K562 (cell line): ENCODE measurements at regions of chr17 and their contacts with region 1.

Region 1: GRCh38 chr17:1399679-1400512 is at the start of gene YWHAE:
- DNase-seq: peak; percentile 83 to 95 (median 87)
- ATAC-seq: peak; percentile 97
- H3K4me3 ChIP-seq: peak within 1 kb of the TSS; percentile 98
- H3K27ac ChIP-seq: peak within 1 kb of the TSS; percentile 99
- H3K4me1 ChIP-seq: peaks cover 8 to 15% of the 10 kb centered on the region in 2 experiments; a peak in 4 of 5 replicates
- H3K27me3 ChIP-seq: no peaks in the 10 kb centered on the region
- CTCF ChIP-seq: no peak
- EP300 ChIP-seq: no peak
- POLR2A ChIP-seq: peak; percentile 96
- RAD21 ChIP-seq: 0 out of 4 replicates have a peak, but pooled peaks of 1 of the 2 experiments have one; percentile 8
- polyA plus RNA-seq, gene YWHAE: 323 to 513 TPM

Region 2: GRCh38 chr17:1384905-1385435 is 14.9 kb before region 1 on chr17:
- CTCF ChIA-PET with region 1: no interaction called
- POLR2A ChIA-PET with region 1: interaction called, 17 read pairs
- in situ Hi-C with region 1: no loop called
- intact Hi-C with region 1: no loop called
- DNase-seq: no peak
- ATAC-seq: no peak
- H3K4me3 ChIP-seq: no peak overlapping the region
- H3K27ac ChIP-seq: no peak overlapping the region
- H3K4me1 ChIP-seq: peaks cover 3 to 4% of the 10 kb centered on the region in 2 experiments; a peak in 3 of 5 replicates
- H3K27me3 ChIP-seq: no peaks in the 10 kb centered on the region
- CTCF ChIP-seq: no peak
- EP300 ChIP-seq: no peak
- POLR2A ChIP-seq: no peak
- RAD21 ChIP-seq: no peak

Region 3: DNA sequence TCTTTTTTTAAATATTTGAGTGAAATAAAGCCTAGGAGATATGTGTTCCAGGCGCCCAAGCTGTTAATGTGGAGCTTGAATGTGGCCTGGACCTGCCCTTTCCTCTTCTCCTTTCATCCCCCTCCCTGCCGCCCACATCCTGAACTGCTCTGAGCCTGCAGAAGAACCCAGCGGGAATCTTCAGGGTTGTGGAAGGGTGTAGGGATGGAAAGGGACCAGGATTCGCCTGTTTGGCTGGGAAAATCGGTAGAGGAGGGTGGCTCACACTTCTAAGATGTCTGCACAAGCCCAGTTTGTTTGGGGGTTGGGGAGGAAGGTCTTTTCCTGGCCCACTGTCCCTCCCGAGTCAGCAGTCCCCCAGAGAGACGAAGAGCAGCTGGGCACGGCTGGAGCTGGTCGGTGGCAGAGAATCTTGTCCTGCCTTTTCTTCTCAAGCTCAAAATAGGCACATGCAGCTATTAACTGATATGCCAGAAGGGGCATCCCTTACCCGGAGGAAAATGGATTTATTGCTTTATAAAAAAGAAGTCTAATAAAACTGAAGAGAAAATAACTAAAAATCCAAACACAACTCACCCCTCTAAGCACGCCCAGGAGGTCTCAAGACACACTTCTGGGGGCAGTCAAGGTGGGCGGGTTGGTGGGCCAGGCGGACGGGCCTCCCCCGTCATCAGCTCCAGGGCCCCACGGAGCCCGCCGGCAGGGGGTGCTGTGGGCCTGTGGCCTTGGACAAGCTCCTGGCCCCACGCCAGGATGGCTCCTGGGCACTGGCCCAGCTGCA is 174.2 kb after region 1 on chr17:
- CTCF ChIA-PET with region 1: no interaction called
- POLR2A ChIA-PET with region 1: no interaction called
- in situ Hi-C with region 1: no loop called
- intact Hi-C with region 1: no loop called
- DNase-seq: peak; percentile 82 to 89 (median 86)
- ATAC-seq: peak; percentile 91
- H3K4me3 ChIP-seq: no peak overlapping the region
- H3K27ac ChIP-seq: no peak overlapping the region
- H3K4me1 ChIP-seq: peaks cover 0 to 36% of the 10 kb centered on the region in 2 experiments; a peak in 3 of 5 replicates
- H3K27me3 ChIP-seq: no peaks in the 10 kb centered on the region
- CTCF ChIP-seq: peak; percentile 81 to 92 (median 84)
- EP300 ChIP-seq: no peak
- POLR2A ChIP-seq: no peak
- RAD21 ChIP-seq: peak; percentile 85 to 92